ENCODE measurements at regions of chr18 and their contacts with region 1.

Region 1: GRCh38 chr18:12934454-12935071 is 13.2 kb upstream of the SEH1L start:
- DNase-seq: peak; percentile 66
- H3K4me3 ChIP-seq: no peak overlapping the region
- H3K27ac ChIP-seq: no peak overlapping the region
- H3K4me1 ChIP-seq: no peaks in the 10 kb centered on the region
- H3K27me3 ChIP-seq: no peaks in the 10 kb centered on the region
- CTCF ChIP-seq: peak; percentile 97 to 98

Region 2: DNA sequence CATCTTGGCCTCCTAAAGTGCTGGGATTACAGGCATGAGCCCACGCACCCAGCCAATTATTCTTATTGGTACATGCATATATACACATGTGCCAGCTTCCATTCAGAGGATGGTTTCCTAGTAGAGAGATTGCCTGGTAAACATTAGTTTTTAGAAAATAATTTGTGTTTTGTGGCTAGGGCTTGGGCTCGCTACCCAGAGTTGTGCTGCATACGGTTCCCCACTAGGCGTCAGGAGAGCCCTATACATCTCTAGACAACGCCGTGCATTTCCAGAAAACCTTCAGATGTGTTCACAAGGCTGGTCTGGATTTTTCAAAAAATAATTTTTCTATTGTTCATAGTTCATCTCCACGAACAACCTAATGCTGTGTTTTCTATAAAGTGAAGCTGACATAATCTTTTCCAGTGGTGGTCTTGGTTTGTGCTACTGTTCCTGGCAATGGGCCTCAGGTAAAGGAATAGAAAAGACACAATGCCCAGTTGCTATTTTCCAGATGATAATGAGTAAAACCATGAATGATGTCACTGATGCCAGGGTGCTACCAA is 542.9 kb before region 1 on chr18:
- CTCF ChIA-PET with region 1: interaction called, 4 read pairs
- dilution Hi-C with region 1: loop called (anchors 5 kb)
- in situ Hi-C with region 1: loop called (anchors 25 kb)
- intact Hi-C with region 1: loop called (anchors 1 kb)
- DNase-seq: peak; percentile 48
- H3K4me3 ChIP-seq: no peak overlapping the region
- H3K27ac ChIP-seq: no peak overlapping the region
- H3K4me1 ChIP-seq: no peaks in the 10 kb centered on the region
- H3K27me3 ChIP-seq: no peaks in the 10 kb centered on the region
- CTCF ChIP-seq: peak; percentile 97 to 99

Region 3: DNA sequence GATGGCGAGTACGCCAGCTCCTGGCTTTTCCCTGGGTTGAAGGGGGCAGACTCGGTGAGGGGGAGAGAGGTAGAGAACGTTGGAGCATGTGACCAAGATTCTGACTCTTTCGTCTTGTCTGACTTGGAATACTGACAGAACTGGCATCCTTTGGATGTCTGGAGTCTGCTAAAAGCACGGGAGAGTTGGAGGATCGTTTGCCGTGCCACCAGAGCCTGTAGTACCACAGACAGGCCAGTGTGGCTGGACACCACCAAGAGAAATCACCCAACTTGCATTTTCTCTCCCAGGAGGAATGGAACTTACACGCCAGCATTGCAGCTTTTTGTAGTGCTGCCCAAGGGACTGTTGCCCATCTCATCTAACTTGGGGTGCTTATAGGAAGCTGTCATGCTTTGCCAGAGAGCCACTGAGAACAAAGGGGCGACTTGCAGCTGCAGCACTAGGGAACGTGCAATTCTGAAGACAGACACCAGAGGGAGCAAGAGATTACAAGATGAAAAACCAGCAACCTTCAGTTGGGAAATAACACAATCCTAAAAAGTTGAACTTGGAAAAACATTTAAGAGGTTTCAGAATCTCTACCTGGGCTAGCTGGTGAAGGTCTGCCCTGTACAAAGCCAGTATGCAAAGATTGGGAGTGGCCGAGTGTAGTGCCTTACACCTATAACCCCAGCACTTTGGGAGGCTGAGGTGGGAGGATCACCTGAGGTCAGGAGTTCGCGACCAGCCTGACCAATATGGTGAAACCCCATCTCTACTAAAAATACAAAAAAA is 207.6 kb before region 1 on chr18:
- CTCF ChIA-PET with region 1: no interaction called
- dilution Hi-C with region 1: loop called (anchors 5 kb)
- in situ Hi-C with region 1: loop called (anchors 5 to 10 kb)
- intact Hi-C with region 1: loop called (anchors 1 kb)
- DNase-seq: peak; percentile 54
- H3K4me3 ChIP-seq: no peak overlapping the region
- H3K27ac ChIP-seq: no peak overlapping the region
- H3K4me1 ChIP-seq: peaks cover 5% of the 10 kb centered on the region
- H3K27me3 ChIP-seq: no peaks in the 10 kb centered on the region
- CTCF ChIP-seq: peak; percentile 83 to 91

Region 4: DNA sequence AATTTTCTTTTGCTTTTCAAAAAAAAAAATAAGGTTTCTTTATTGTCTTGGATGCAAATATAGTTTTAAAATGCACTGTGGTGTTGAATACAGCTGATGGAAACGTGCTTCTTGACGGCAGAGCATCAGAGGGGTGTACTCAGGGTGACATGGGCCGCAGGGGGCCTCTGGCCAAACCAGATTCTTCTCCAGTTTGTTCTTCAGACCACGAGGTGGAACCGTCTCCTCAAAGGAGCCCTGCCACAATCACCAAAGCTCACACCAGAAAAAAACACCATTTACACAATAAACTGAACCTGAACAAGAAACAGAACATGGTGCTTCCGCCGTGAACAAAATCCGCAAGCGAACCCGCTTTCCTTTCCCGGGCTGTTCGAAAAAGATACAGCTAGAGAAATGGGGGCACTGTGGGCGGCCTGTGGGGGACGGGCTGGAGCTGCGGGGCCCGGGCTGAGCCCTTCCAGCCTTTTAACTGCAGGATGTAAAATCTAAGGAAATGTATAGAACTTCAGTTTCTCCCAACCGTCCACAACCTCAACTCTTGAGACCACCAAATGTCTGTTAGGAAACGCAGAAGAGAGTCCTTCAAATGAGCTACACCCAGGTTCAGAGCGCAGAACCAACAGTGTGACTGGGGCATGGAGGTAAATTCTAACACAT is 197.2 kb before region 1 on chr18:
- CTCF ChIA-PET with region 1: no interaction called
- dilution Hi-C with region 1: loop called (anchors 5 kb)
- in situ Hi-C with region 1: loop called in 1 of 2 experiments (anchors 10 kb)
- intact Hi-C with region 1: no loop called
- DNase-seq: no peak
- H3K4me3 ChIP-seq: no peak overlapping the region
- H3K27ac ChIP-seq: no peak overlapping the region
- H3K4me1 ChIP-seq: peaks cover 8% of the 10 kb centered on the region
- H3K27me3 ChIP-seq: no peaks in the 10 kb centered on the region
- CTCF ChIP-seq: no peak

Region 5: DNA sequence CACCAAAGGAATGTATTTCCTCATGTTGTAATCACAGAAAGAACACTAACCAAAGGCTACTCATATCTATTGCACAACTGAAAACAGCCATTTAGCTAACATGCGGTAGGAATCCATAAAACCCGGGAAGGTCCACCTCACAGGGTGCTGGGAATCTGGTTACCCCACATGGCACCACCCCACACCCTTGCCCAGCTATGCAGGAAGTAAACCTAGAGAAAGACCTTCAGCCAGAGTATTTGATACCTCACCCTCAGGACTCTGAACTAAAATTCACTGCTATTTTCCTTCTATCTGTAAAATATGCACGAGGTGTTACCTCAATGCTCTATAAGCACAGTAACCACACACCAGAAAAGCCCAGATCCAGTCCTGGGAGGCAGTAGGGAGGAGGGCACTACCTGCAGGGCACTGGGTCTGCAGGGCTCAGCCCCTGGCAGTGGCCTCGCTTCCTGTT is 96.4 kb before region 1 on chr18:
- CTCF ChIA-PET with region 1: no interaction called
- dilution Hi-C with region 1: loop called (anchors 5 kb)
- in situ Hi-C with region 1: no loop called
- intact Hi-C with region 1: no loop called
- DNase-seq: peak; percentile 94
- H3K4me3 ChIP-seq: peak overlapping the region in 1 of 3 experiments; percentile 30
- H3K27ac ChIP-seq: peak overlapping the region; percentile 93
- H3K4me1 ChIP-seq: peaks cover 17% of the 10 kb centered on the region
- H3K27me3 ChIP-seq: no peaks in the 10 kb centered on the region
- CTCF ChIP-seq: no peak

Region 6: GRCh38 chr18:12890506-12890905 is 44.1 kb before region 1 on chr18:
- CTCF ChIA-PET with region 1: interaction called, 3 read pairs
- dilution Hi-C with region 1: no loop called
- in situ Hi-C with region 1: no loop called
- intact Hi-C with region 1: loop called (anchors 1 kb)
- DNase-seq: no peak
- H3K4me3 ChIP-seq: no peak overlapping the region
- H3K27ac ChIP-seq: peak overlapping the region; percentile 7
- H3K4me1 ChIP-seq: no peaks in the 10 kb centered on the region
- H3K27me3 ChIP-seq: no peaks in the 10 kb centered on the region
- CTCF ChIP-seq: peak in 1 of 2 donors; percentile 2

Region 7: GRCh38 chr18:13629841-13630715 is 695.5 kb after region 1 on chr18:
- CTCF ChIA-PET with region 1: no interaction called
- dilution Hi-C with region 1: no loop called
- in situ Hi-C with region 1: no loop called
- intact Hi-C with region 1: loop called (anchors 10 kb)
- DNase-seq: peak; percentile 43
- H3K4me3 ChIP-seq: no peak overlapping the region
- H3K27ac ChIP-seq: no peak overlapping the region
- H3K4me1 ChIP-seq: no peaks in the 10 kb centered on the region
- H3K27me3 ChIP-seq: no peaks in the 10 kb centered on the region
- CTCF ChIP-seq: peak; percentile 61 to 81

Measured in mammary epithelial cell (primary cell).